ENCODE measurements at regions of chr6 and their contacts with region 1.

Region 1: DNA sequence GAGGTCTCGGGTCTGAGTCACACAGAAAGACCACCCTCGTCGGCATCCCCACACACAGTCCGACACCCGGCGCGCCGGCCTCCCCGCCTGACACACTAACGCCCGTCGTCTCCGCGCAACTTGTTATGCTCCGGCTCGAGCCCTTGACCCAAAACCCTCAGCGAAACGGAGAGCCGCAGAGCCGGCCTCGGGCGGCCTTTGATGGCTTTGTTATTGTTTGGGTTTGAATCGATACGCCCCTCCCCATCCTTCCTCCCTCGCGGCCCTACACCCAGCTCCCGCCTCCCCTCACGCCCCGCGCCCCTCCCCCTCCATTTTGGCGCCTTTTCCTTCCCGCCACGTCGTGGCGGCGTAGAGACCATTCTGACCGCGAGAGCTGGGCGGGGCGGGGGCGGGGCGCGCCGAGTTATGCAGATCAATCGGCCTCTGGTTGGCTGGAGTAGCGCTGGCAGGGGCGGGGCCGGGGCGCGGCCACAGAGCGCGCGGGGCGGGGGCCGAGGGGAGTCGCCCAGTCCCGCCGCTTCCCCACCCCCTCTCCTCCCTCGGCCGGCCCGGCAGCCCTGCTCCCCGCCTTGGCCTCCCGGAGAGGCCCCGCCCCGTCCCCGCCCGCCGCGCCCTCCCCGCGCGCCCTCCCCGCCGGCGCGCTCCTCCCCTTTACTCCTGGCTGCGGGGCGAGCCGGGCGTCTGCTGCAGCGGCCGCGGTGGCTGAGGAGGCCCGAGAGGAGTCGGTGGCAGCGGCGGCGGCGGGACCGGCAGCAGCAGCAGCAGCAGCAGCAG is at the start of gene PIM1:
- DNase-seq: peak; percentile 100
- ATAC-seq: peak; percentile 76
- H3K4me3 Mint-ChIP-seq: peak within 1 kb of the TSS; percentile 91
- H3K27ac Mint-ChIP-seq: peak within 1 kb of the TSS; percentile 96
- H3K4me1 Mint-ChIP-seq: peaks cover 39% of the 10 kb centered on the region
- H3K27me3 Mint-ChIP-seq: no peaks in the 10 kb centered on the region
- total RNA-seq, gene PIM1: 137 to 163 TPM

Region 2: GRCh38 chr6:36594029-36594815 is 575.5 kb before region 1 on chr6 and contains the start of gene SRSF3:
- CTCF ChIA-PET with region 1: no interaction called
- POLR2A ChIA-PET with region 1: no interaction called
- intact Hi-C with region 1: loop called in 1 of 2 experiments (anchors 2 kb)
- DNase-seq: peak; percentile 98
- ATAC-seq: peak; percentile 92
- H3K4me3 Mint-ChIP-seq: peak within 1 kb of the TSS; percentile 88
- H3K27ac Mint-ChIP-seq: peak within 1 kb of the TSS; percentile 99
- H3K4me1 Mint-ChIP-seq: peaks cover 21% of the 10 kb centered on the region
- H3K27me3 Mint-ChIP-seq: no peaks in the 10 kb centered on the region
- total RNA-seq, gene SRSF3: 298 to 464 TPM

Region 3: DNA sequence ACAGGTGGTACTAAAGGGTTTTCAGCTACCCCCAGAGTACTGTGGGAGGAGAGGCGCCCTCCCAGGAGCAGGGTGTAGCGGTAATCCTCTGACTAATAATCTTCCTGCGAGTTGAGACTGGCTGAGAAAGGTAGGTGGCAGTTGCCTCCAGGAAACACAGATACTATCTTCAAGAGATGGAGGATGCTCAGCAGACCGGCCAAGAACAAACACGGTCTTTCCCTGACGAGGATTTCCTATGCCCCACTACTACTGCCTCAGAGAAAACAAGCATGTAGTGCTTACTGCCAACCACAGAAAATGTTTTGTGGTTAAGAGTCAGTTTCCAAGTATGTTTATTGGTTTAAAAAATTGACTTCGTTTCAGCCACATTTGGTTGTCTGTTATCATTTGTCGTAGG is 257.1 kb before region 1 on chr6:
- CTCF ChIA-PET with region 1: no interaction called
- POLR2A ChIA-PET with region 1: interaction called, 3 read pairs
- intact Hi-C with region 1: loop called in 1 of 2 experiments (anchors 1 kb)
- DNase-seq: peak; percentile 74
- ATAC-seq: peak; percentile 87
- H3K4me3 Mint-ChIP-seq: peak overlapping the region; percentile 37
- H3K27ac Mint-ChIP-seq: peak overlapping the region; percentile 83
- H3K4me1 Mint-ChIP-seq: peaks cover 44% of the 10 kb centered on the region
- H3K27me3 Mint-ChIP-seq: no peaks in the 10 kb centered on the region

Region 4: DNA sequence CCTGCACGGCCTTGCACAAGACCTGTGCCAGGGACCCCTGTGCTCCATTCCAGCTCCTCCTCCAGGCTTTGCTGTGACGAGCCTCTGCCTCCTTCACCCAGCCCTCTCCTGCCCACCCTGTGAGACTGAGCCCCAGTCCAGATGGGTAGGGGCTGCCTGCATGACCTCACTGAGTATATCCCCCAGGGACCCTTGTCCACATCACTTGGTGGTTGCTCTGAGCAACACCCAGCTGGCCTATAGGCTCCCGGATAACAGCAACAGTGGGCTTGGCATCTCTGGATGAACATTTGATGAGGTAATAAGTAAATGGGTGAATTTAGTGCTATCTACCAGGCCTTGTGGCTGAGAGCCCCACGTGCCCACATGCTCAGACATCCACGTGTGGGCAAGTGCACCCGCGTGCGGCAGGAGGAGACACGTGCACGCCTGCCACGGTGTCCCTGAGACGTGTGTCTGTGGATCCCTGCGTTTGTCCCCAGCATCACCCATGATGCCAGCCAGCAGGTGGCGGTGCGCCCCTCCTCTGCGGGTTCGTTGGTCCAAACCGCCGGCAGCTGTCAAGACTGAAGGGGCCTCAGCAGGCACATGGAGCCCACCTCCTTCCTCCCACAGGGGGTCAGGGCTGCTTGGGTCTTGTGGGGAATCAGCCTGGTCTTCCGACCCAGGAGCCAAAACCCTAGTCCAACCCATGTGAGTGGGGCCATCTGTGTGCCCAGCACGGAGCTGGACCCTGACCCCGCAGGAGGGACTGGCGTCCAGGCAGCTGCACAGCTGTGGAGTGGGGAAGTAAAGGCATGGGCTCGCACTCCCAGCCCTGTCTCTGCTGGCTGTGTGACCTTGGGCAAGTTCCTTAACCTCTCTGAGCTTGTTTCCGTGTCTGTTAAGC is 118.3 kb before region 1 on chr6:
- CTCF ChIA-PET with region 1: interaction called, 133 read pairs
- POLR2A ChIA-PET with region 1: interaction called, 65 read pairs
- intact Hi-C with region 1: loop called (anchors 1 kb)
- DNase-seq: peak; percentile 95
- ATAC-seq: peak; percentile 43
- H3K4me3 Mint-ChIP-seq: peak overlapping the region; percentile 79
- H3K27ac Mint-ChIP-seq: peak overlapping the region; percentile 100
- H3K4me1 Mint-ChIP-seq: peaks cover 55% of the 10 kb centered on the region
- H3K27me3 Mint-ChIP-seq: no peaks in the 10 kb centered on the region

Region 5: DNA sequence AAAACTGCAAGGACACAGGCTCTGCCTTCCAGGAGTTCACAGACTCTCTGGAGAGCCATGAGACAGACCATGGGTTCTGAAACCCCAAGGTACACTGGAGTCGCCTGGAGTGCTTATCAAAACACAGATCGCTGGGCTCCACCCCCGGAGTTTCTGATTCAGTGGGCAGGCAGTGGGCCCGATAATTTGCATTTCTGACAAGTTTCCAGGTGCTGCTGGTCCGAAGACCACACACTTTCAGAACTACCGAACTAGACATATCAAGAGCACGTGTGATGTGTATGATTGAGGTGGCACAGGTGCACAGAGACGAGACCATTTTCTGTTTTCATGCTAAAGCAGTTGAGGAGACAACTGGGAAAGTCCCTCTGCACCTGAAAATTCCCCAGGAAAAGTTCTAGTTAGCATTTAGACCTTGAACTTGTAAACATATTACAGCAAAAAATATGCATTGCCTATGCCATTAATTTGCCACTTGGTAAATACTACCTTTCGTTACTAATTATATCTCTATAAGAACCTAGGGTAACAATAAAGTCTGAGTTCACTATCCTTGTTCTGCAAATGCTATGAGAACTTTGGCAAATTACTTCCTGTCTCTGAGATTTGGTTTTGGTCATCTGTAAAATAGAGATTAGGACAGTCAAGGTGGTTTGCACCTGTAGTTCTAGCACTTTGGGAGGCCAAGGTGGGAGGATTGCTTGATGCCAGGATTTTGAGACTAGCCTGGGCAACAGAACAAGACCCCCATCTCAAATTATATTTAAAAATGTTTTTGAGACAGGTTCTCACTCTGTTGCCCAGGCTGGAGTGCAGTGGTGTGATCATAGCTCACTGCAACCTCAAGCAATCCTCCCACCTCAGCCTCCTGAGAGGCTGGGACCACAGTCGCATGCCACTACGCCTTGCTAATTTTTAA is 14.0 kb before region 1 on chr6:
- CTCF ChIA-PET with region 1: interaction called, 6 read pairs
- POLR2A ChIA-PET with region 1: interaction called, 3 read pairs
- intact Hi-C with region 1: loop called in 1 of 2 experiments (anchors 1 kb)
- DNase-seq: peak; percentile 80
- ATAC-seq: peak; percentile 89
- H3K4me3 Mint-ChIP-seq: peak overlapping the region; percentile 27
- H3K27ac Mint-ChIP-seq: peak overlapping the region; percentile 53
- H3K4me1 Mint-ChIP-seq: peaks cover 31% of the 10 kb centered on the region
- H3K27me3 Mint-ChIP-seq: no peaks in the 10 kb centered on the region

Region 6: DNA sequence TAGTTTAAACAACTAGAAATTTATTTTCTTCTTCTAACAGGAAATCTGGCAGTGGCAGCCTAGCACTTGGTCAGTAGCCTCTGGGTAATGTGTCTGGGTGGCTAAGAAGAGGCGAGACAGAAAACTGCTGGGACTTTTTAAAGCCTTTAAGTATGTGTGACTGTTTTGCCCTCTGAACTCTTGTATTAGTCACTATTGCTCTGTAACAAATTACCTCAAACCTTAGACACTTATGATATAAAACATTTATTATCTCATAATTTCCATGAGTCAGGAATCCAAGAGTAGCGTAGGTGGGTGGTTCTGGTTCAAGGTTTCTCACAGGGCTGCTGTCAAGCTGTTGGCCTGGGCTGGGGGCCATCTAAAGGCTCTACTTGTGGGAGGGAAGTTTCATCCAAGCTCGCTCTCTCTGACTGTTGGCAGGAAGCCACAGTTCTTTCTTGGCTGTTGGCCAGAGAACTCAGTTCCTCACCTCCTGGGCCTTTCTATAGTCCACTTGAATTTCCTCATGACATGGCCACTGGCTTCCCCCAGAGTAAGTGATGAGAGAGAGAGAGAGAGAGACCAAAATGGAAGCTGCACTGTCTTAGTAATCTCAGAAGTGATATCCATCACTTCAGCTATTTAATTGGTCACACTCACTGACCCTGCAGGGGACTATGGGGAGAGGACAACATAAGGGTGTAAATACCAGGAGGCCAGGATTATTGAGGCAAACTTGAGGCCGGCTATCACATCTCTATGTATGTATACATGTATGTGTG is 70.4 kb after region 1 on chr6:
- CTCF ChIA-PET with region 1: interaction called, 7 read pairs
- POLR2A ChIA-PET with region 1: interaction called, 3 read pairs
- intact Hi-C with region 1: loop called in 1 of 2 experiments (anchors 1 kb)
- DNase-seq: peak; percentile 90
- ATAC-seq: peak; percentile 92
- H3K4me3 Mint-ChIP-seq: peak overlapping the region; percentile 19
- H3K27ac Mint-ChIP-seq: peak overlapping the region; percentile 84
- H3K4me1 Mint-ChIP-seq: peaks cover 46% of the 10 kb centered on the region
- H3K27me3 Mint-ChIP-seq: no peaks in the 10 kb centered on the region

Region 7: GRCh38 chr6:37819177-37819823 is 649.6 kb after region 1 on chr6 and contains the start of gene ZFAND3:
- CTCF ChIA-PET with region 1: no interaction called
- POLR2A ChIA-PET with region 1: no interaction called
- intact Hi-C with region 1: loop called in 1 of 2 experiments (anchors 1 kb)
- DNase-seq: peak; percentile 97
- ATAC-seq: peak; percentile 80
- H3K4me3 Mint-ChIP-seq: peak within 1 kb of the TSS; percentile 98
- H3K27ac Mint-ChIP-seq: peak within 1 kb of the TSS; percentile 96
- H3K4me1 Mint-ChIP-seq: peaks cover 51% of the 10 kb centered on the region
- H3K27me3 Mint-ChIP-seq: no peaks in the 10 kb centered on the region
- total RNA-seq, gene ZFAND3: 34.5 to 47.8 TPM

Measured in activated CD4-positive, alpha-beta T cell treated with anti-CD3 and anti-CD28 coated beads for 36 hours (primary cell).